Pancreas (tissue), 10 donors: ENCODE measurements at regions of chr13 and their contacts with region 1.

Region 1: DNA sequence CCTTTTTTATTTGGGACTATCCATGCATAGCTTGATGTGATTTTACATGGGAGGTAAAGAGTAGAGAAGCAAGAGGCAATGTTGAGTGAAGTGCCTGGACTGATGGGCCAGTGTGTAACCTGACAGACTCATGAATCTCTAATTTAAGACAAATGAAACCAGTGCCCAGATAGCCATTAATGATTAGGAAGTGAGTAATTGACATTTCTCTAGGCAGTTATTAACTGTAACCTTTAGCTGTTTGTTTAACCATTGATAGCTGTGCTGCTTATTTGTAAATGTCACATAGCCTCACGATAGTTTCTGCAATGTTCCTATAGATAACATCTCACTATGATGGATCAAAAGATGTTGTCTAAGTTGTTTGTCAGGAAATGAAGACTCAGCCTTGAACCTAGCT is 1047.5 kb upstream of the SPRY2 start:
- DNase-seq: no peak
- ATAC-seq: no peak
- H3K4me3 ChIP-seq: no peak overlapping the region
- H3K27ac ChIP-seq: no peak overlapping the region
- H3K4me1 ChIP-seq: no peaks in the 10 kb centered on the region
- H3K27me3 ChIP-seq: no peaks in the 10 kb centered on the region
- CTCF ChIP-seq: no peak

Region 2: DNA sequence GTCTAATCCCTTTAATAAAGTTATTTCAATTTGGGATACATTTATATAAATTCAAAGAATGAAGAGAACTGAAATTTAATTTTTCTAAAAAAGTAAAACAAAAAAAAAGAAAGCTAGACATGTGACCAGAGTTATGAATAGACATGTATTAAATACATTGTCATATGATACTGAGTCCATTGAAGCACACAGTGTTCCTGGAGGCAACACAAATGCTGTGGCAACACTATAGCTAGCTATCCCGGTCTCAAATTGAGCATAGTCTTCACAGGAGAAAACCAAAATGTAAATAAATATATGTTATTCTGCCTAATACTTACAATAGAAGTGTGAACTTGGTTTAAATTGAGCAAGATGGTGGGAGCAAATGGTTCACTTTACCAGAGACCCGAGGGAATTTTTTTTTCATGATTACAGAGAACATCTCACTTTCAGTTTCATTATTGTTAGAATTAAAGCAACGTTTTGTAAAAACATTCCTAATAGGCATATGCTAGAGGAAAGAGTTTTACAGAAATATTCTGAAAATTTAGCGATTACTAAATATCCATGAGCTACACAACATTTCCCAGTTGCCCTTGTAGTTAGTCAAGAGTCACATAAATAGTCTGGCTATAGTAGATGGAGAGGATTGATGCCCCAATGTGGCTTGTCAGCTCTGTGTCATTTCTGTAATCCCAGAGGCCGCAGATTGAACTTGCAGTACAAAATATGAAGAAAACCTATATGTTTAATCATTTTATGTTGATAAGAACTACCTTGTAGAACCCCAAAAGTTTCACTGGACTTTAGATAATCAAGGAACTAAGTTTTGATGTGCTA is 271.7 kb before region 1 on chr13:
- intact Hi-C with region 1: no loop called
- DNase-seq: no peak
- ATAC-seq: no peak
- H3K4me3 ChIP-seq: no peak overlapping the region
- H3K27ac ChIP-seq: no peak overlapping the region
- H3K4me1 ChIP-seq: no peaks in the 10 kb centered on the region
- H3K27me3 ChIP-seq: no peaks in the 10 kb centered on the region
- CTCF ChIP-seq: no peak

Region 3: DNA sequence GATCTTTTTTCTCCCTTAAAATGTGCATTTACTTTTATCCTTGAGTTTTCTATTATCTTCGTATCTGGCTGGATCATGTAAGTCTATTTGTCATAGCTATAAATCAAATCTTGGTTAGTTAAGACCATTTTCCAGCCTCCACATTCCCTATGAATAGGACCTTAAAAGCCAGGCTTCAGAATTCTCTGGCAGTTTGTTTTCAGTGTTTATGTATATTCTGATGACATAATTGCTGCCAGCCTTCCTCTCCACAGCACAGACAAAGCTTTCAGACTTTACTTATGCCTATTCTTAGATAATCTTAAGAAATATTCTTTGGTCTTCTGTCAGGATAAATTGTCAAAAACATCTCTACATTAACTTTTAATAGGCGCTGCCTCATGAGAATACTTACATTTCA is 176.7 kb before region 1 on chr13:
- intact Hi-C with region 1: no loop called
- DNase-seq: no peak
- ATAC-seq: no peak
- H3K4me3 ChIP-seq: no peak overlapping the region
- H3K27ac ChIP-seq: no peak overlapping the region
- H3K4me1 ChIP-seq: no peaks in the 10 kb centered on the region
- H3K27me3 ChIP-seq: no peaks in the 10 kb centered on the region
- CTCF ChIP-seq: no peak

Region 4: DNA sequence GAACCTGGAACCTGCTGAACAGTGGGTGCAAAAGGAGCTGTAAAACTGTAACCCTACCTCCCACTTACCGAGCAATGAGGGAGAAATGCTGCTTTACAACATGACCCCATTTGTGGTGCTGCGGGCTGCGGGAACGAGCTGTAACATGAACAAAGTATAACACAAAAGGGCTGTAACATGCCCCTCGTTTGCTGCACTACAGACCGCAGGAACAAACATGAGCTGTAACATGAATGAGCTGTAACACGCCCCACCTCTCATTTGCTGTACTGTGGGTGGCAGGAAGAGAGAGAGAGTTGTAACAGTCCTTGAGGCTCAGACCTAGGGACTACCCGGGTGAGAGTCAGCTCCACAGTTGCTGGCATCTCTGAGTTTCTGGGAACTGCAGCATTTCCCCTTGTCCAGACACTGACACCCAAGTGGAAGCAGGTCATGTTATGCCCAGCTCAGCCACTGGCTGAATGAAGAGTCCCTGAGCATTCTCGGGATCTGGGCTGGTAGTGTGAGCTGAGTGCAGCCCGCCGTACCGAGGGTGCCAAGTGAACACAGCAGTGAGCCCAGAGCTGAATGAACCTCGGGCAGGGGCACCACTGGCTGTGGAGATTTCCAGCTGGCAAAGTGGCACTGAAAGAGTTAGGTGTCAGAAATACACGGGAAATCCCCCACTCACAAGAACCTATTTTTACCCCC is 337.8 kb after region 1 on chr13:
- intact Hi-C with region 1: loop called in 1 of 3 experiments (anchors 10 kb)
- DNase-seq: no peak
- ATAC-seq: no peak
- H3K4me3 ChIP-seq: no peak overlapping the region
- H3K27ac ChIP-seq: no peak overlapping the region
- H3K4me1 ChIP-seq: no peaks in the 10 kb centered on the region
- H3K27me3 ChIP-seq: no peaks in the 10 kb centered on the region
- CTCF ChIP-seq: no peak